ENCODE measurements at regions of chr1 and their contacts with region 1.

Region 1: DNA sequence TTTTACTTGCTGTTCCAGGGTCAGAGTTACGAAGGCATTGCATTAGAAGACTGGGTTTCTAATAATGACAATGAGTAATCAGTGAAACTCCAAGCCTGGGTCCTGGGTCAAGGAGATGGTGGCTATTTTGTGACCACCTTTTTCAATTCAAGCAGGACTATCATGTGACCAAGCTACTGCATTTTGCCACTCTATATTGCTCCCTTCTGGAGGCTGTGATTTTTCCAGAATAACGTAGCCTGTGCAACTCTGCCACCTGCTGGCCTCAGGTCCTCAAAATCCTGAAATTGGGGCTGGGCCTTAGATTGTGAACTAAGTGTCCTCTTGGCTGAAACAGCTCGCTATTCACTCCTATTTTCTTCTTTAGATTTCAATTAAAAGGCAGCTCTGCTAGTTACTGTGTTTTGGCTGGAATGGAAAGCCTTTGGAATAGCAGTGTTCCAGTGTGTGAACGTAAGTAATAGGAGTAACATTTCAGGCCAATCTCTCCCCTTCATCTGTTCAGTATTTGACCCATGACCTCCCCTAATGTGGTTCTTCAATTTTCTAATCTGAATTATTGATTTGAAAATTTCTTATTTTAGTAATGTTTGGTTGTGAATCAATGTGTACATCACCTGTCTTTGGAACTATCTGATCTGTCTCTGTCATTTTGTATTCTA is 52.9 kb upstream of the CD46 start:
- DNase-seq: no peak
- H3K4me3 ChIP-seq: no peak overlapping the region
- CTCF ChIP-seq: peak; percentile 58

Region 2: GRCh38 chr1:207565546-207566358 is 133.2 kb before region 1 on chr1:
- CTCF ChIA-PET with region 1: no interaction called
- POLR2A ChIA-PET with region 1: no interaction called
- DNase-seq: no peak
- H3K4me3 ChIP-seq: no peak overlapping the region
- CTCF ChIP-seq: no peak

Region 3: GRCh38 chr1:207579436-207579799 is 119.5 kb before region 1 on chr1:
- CTCF ChIA-PET with region 1: interaction called, 26 read pairs
- POLR2A ChIA-PET with region 1: no interaction called
- DNase-seq: no peak
- H3K4me3 ChIP-seq: no peak overlapping the region
- CTCF ChIP-seq: peak; percentile 45

Region 4: DNA sequence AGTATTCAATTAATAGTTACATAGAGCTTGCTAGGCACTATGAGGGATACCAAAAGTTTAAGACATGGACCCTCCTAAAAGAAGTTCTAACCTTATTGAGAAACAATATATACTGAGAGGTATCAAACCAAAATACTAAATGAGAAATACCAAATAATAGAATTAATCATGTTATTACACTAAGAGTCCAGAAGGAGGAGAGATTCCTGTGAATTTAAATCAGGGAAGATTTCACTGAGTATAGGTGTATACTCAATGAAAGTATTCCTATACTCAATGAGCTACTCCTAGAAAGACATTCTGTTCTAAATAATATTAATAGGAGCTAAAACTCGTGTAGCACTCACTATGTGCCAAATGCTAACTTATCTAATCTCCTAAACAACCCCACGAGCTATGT is 44.6 kb before region 1 on chr1:
- CTCF ChIA-PET with region 1: interaction called, 23 read pairs
- POLR2A ChIA-PET with region 1: no interaction called
- DNase-seq: no peak
- H3K4me3 ChIP-seq: no peak overlapping the region
- CTCF ChIP-seq: no peak